WTC11 (cell line): ENCODE measurements at regions of chr16 and their contacts with region 1.

Region 1: GRCh38 chr16:50841081-50841886 is 99.4 kb downstream of the CYLD start:
- DNase-seq: peak; percentile 66
- ATAC-seq: peak; percentile 79
- H3K4me3 Mint-ChIP-seq: peak overlapping the region; percentile 60
- H3K27ac Mint-ChIP-seq: no peak overlapping the region
- H3K4me1 Mint-ChIP-seq: peaks cover 27% of the 10 kb centered on the region
- H3K27me3 Mint-ChIP-seq: peaks cover 11% of the 10 kb centered on the region
- CTCF ChIP-seq: no peak

Region 2: GRCh38 chr16:51048544-51048943 is 207.3 kb after region 1 on chr16:
- CTCF ChIA-PET with region 1: interaction called, 13 read pairs
- POLR2A ChIA-PET with region 1: no interaction called
- DNase-seq: no peak
- ATAC-seq: no peak
- H3K4me3 Mint-ChIP-seq: no peak overlapping the region
- H3K27ac Mint-ChIP-seq: no peak overlapping the region
- H3K4me1 Mint-ChIP-seq: peaks cover 9% of the 10 kb centered on the region; the same call in 1 of the 2 replicates
- H3K27me3 Mint-ChIP-seq: no peaks in the 10 kb centered on the region
- CTCF ChIP-seq: no peak